Esophagus muscularis mucosa (tissue), 4 donors: ENCODE measurements at regions of chr1 and their contacts with region 1.

Region 1: GRCh38 chr1:96721416-96722160 is at the start of gene PTBP2:
- DNase-seq: peak; percentile 96
- H3K4me3 ChIP-seq: peak within 1 kb of the TSS; percentile 86 to 97 (median 92)
- H3K27ac ChIP-seq: peak within 1 kb of the TSS; percentile 93 to 96 (median 95)
- H3K4me1 ChIP-seq: peaks cover 9 to 35% (median 29%) of the 10 kb centered on the region in 4 donors
- H3K27me3 ChIP-seq: no peaks in the 10 kb centered on the region
- CTCF ChIP-seq: peak in 2 of 3 experiments; percentile 5 to 13
- EP300 ChIP-seq: no peak
- POLR2A ChIP-seq: no peak
- total RNA-seq, gene PTBP2: 66.9 to 111 (median 82.8) TPM

Region 2: GRCh38 chr1:96544831-96545221 is 176.8 kb before region 1 on chr1:
- intact Hi-C with region 1: loop called (anchors 5 kb)
- DNase-seq: no peak
- H3K4me3 ChIP-seq: no peak overlapping the region
- H3K27ac ChIP-seq: no peak overlapping the region
- H3K4me1 ChIP-seq: peaks cover 3 to 7% (median 6%) of the 10 kb centered on the region in 4 donors
- H3K27me3 ChIP-seq: no peaks in the 10 kb centered on the region
- CTCF ChIP-seq: no peak
- EP300 ChIP-seq: no peak
- POLR2A ChIP-seq: no peak

Region 3: DNA sequence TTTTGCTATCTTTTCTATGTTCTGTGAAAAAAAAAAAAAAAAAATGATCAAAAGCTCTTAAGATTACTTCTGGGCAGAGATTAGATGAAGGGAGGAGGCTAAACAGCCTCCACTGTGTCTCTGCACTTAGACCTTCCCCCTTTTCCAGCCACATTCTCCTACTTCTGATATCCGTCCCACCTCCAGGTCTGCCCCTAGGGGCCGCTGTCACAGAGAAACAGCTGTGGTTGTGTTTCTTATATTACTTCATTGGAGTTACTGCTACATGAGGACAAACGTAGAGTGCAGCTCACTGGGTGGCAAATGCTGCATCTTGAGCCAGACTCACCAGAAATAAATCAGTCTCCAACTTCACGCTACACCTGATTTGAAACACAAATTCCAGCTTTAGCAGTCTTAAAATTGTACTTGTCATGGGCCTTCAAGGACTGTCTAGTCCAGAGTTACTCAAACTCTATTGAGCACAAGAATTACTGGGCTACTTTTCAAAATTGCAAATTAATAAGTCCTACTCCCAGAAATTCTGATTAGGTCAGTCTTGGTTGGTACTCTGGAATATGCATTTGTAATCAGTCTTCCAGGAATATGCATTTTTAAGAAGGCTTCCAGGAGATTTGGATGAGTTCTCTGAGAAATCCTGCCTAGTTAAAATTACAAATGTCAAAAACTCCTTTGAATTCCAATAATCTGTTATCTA is 125.2 kb before region 1 on chr1:
- intact Hi-C with region 1: loop called (anchors 5 kb)
- DNase-seq: no peak
- H3K4me3 ChIP-seq: no peak overlapping the region
- H3K27ac ChIP-seq: no peak overlapping the region
- H3K4me1 ChIP-seq: peaks cover 0 to 40% (median 29%) of the 10 kb centered on the region in 4 donors
- H3K27me3 ChIP-seq: no peaks in the 10 kb centered on the region
- CTCF ChIP-seq: peak in 1 of 3 experiments; percentile 31
- EP300 ChIP-seq: no peak
- POLR2A ChIP-seq: no peak

Region 4: DNA sequence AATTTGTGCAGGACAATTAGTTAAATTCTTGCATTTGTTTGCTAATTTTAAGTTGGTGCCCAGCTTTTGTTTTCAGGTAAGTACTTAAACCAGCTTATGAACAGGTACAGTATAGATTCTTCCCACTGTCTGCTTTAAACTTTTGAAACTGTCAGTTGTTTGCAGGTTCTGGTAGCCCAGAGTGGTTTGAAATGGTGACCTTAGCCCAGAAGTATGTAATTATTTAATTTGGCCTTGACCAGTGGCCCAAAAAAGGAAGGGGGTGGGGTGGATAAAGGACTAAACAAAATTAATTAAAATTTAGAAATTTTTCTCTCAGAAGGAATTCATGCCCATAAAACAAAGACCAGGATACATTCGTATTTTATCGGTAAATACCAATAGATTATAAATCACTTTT is 69.0 kb after region 1 on chr1:
- intact Hi-C with region 1: no loop called
- DNase-seq: no peak
- H3K4me3 ChIP-seq: no peak overlapping the region
- H3K27ac ChIP-seq: no peak overlapping the region
- H3K4me1 ChIP-seq: peaks cover 0 to 13% (median 10%) of the 10 kb centered on the region in 4 donors
- H3K27me3 ChIP-seq: no peaks in the 10 kb centered on the region
- CTCF ChIP-seq: no peak
- EP300 ChIP-seq: no peak
- POLR2A ChIP-seq: no peak

Region 5: DNA sequence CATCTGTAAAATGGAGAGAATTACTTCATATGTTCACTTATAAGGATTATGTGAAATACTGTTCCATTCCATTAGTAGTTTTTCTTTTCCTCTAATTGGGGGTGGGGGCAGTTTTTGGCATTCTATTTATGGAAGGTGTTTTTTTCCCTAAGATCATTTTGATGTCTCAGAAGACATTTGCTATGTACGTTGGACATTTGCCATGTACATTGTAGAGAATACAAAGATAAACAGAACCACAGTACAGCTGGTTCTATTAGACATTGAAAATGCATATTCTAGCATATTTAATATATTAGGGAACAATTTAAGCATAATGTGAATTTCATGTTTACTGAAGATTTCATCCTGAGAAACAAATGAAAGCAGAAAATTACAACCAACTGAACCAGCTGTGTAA is 98.5 kb after region 1 on chr1:
- intact Hi-C with region 1: no loop called
- DNase-seq: no peak
- H3K4me3 ChIP-seq: no peak overlapping the region
- H3K27ac ChIP-seq: no peak overlapping the region
- H3K4me1 ChIP-seq: peaks cover 0 to 22% (median 19%) of the 10 kb centered on the region in 4 donors
- H3K27me3 ChIP-seq: no peaks in the 10 kb centered on the region
- CTCF ChIP-seq: no peak
- EP300 ChIP-seq: no peak
- POLR2A ChIP-seq: no peak